ENCODE measurements at regions of chr4 and their contacts with region 1.

Region 1: GRCh38 chr4:161252520-161253141 is 911.2 kb downstream of the FSTL5 start:
- DNase-seq: no peak
- ATAC-seq: no peak
- H3K4me3 ChIP-seq: no peak overlapping the region
- H3K27ac ChIP-seq: no peak overlapping the region
- H3K4me1 ChIP-seq: no peaks in the 10 kb centered on the region
- H3K27me3 ChIP-seq: no peaks in the 10 kb centered on the region
- CTCF ChIP-seq: peak in 8 of 9 donors; percentile 20 to 61 (median 46)

Region 2: GRCh38 chr4:161222889-161223288 is 29.7 kb before region 1 on chr4:
- intact Hi-C with region 1: loop called in 1 of 10 experiments (anchors 2 kb)
- DNase-seq: no peak
- ATAC-seq: no peak
- H3K4me3 ChIP-seq: no peak overlapping the region
- H3K27ac ChIP-seq: no peak overlapping the region
- H3K4me1 ChIP-seq: no peaks in the 10 kb centered on the region
- H3K27me3 ChIP-seq: no peaks in the 10 kb centered on the region
- CTCF ChIP-seq: no peak

Region 3: GRCh38 chr4:161273607-161274006 is 21.0 kb after region 1 on chr4:
- intact Hi-C with region 1: loop called in 1 of 10 experiments (anchors 1 kb)
- DNase-seq: no peak
- ATAC-seq: no peak
- H3K4me3 ChIP-seq: no peak overlapping the region
- H3K27ac ChIP-seq: no peak overlapping the region
- H3K4me1 ChIP-seq: no peaks in the 10 kb centered on the region
- H3K27me3 ChIP-seq: no peaks in the 10 kb centered on the region
- CTCF ChIP-seq: no peak

Region 4: DNA sequence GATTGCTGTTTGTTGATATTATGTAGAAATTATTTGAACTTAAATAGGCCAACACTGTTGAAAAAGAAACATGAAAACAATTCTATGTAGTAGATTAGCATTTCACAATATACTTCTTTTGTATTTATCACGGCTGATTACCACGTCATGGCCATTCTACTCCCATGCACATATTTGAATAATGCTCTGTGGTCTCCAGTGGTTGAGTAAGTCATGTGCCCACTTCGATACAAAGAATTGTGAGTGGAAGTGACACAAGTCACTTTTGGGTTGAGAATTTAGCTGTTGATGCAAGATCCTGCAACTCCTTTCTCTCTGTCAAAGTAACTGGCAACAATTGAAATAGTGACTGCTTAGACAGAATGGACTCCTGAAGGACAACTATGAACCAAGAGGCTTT is 917.9 kb after region 1 on chr4:
- intact Hi-C with region 1: loop called in 1 of 10 experiments (anchors 10 kb)
- DNase-seq: no peak
- ATAC-seq: no peak
- H3K4me3 ChIP-seq: no peak overlapping the region
- H3K27ac ChIP-seq: no peak overlapping the region
- H3K4me1 ChIP-seq: no peaks in the 10 kb centered on the region
- H3K27me3 ChIP-seq: peaks cover 0 to 19% (median 0%) of the 10 kb centered on the region in 7 donors
- CTCF ChIP-seq: no peak